AG04450 (cell line): ENCODE measurements at regions of chr10 and their contacts with region 1.

Region 1: DNA sequence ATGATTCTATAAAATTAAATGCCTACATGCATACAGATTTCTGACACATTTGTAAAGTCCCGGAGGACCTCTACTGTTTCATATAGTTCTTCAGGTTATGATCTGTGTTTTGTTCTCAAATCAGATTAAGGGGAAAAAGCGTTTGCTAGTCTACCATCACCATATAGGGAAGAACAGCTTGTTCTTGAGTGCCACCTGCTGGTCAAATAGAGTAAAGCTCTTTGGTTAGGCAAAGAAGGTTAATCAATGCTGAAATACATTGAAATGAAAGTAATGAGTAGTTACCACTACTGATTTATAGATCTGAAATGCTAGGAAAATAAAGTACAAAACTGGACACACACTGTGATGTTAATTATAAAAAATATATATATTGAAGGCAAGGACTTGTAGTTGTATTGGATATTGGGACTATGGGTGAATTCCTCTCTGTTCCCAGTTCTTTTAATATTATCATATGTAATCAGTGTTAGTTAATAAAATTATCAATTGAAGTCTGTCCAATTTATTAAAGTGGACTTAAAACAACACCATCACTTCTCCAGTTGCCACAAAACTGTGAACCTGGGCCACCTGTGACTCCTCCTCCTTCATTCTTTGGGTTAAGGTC is 72.6 kb upstream of the PDLIM1 start:
- DNase-seq: no peak
- H3K4me3 ChIP-seq: no peak overlapping the region
- H3K27ac ChIP-seq: no peak overlapping the region
- H3K27me3 ChIP-seq: peaks cover 5% of the 10 kb centered on the region
- CTCF ChIP-seq: peak; percentile 88

Region 2: GRCh38 chr10:94500063-94500462 is 863.3 kb before region 1 on chr10:
- CTCF ChIA-PET with region 1: no interaction called
- POLR2A ChIA-PET with region 1: no interaction called
- DNase-seq: no peak
- H3K4me3 ChIP-seq: no peak overlapping the region
- H3K27ac ChIP-seq: no peak overlapping the region
- H3K27me3 ChIP-seq: no peaks in the 10 kb centered on the region
- CTCF ChIP-seq: peak; percentile 59

Region 3: DNA sequence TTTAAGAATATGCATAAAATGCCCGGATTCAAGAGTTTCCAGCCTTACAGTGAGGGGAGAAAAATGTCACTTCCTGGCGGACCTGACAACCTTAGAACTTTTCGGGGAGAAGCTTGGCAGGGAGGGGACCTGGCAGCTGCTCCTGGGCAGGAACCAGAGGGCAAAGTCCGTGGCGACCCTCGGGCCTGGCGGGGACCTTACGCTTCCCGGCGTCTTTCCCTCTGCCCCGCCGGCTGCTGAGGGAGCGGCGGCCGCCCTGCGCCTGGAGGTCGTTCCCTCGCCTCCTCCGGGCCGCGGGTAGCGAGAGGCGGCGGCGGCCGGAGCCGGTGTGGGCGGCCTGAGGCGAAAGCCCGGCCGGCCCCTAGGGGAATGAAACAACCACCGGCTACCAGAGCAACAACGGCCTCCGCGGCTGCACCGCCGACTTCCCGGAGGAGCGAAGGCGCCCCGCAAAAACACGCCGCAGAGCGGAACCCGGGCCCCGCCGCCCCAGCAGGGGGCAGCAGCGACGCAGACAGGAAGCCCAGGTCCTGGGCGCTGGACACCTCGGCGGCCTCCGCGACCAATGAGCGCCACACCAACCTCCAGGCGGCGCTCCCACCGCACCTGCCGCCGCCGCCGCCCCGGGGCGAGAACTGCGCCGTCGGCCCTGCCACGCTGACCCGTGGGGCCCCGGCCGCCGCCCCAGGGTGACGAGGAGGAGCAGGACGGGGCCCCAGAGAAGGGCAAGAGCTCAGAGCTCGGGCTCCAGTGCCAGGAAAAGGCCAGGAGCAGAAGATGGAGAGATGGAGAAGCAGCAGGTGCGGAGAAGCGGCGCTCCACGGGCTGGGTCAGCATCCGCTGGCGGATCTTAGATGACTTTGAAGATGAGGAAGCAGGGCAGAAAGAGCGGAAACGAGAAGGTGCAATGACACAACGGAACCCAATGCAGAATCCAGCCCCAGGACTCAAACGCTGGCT is 179.9 kb before region 1 on chr10:
- CTCF ChIA-PET with region 1: interaction called, 130 read pairs
- POLR2A ChIA-PET with region 1: no interaction called
- DNase-seq: peak; percentile 58
- H3K4me3 ChIP-seq: peak overlapping the region; percentile 65
- H3K27ac ChIP-seq: no peak overlapping the region
- H3K27me3 ChIP-seq: peaks cover 8% of the 10 kb centered on the region
- CTCF ChIP-seq: peak; percentile 81

Region 4: DNA sequence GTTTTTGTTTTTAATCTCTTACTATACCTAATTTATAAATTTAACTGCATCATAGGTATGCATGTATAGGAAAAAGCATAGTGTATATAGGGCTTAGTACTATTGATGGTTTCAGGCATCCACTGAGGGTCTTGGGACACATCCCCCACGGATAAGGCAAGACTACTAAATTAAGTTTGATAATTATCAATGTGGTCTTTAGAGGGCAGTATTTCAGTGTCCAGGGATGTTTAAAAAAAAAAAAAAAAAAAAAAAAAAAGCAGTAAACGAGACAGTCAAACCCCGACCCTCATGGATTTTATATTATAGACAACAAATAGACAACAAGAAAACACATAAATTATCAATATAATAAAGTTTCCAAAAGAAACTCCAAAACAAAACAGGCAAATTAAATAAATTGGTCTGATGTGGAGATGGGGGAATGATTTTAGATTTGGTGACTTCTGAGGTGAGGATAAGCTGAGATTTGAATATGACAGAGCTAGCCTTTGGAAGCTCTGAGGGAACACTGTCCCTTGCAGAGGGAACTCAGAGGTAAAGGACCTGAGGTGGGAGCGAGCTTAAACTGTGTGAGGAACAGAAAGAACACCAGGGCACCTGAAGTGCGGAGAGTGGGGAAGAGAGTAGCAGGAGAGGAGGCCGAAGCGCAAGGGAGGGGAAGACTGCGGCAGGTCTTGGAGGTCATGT is 154.6 kb before region 1 on chr10:
- CTCF ChIA-PET with region 1: interaction called, 67 read pairs
- POLR2A ChIA-PET with region 1: no interaction called
- DNase-seq: no peak
- H3K4me3 ChIP-seq: no peak overlapping the region
- H3K27ac ChIP-seq: no peak overlapping the region
- H3K27me3 ChIP-seq: no peaks in the 10 kb centered on the region
- CTCF ChIP-seq: peak; percentile 56

Region 5: GRCh38 chr10:95273393-95274312 is 89.8 kb before region 1 on chr10:
- CTCF ChIA-PET with region 1: interaction called, 27 read pairs
- POLR2A ChIA-PET with region 1: interaction called, 7 read pairs
- DNase-seq: peak; percentile 65
- H3K4me3 ChIP-seq: peak overlapping the region; percentile 10; the same call in 1 of the 2 replicates
- H3K27ac ChIP-seq: peak overlapping the region; percentile 94
- H3K27me3 ChIP-seq: no peaks in the 10 kb centered on the region
- CTCF ChIP-seq: no peak

Region 6: DNA sequence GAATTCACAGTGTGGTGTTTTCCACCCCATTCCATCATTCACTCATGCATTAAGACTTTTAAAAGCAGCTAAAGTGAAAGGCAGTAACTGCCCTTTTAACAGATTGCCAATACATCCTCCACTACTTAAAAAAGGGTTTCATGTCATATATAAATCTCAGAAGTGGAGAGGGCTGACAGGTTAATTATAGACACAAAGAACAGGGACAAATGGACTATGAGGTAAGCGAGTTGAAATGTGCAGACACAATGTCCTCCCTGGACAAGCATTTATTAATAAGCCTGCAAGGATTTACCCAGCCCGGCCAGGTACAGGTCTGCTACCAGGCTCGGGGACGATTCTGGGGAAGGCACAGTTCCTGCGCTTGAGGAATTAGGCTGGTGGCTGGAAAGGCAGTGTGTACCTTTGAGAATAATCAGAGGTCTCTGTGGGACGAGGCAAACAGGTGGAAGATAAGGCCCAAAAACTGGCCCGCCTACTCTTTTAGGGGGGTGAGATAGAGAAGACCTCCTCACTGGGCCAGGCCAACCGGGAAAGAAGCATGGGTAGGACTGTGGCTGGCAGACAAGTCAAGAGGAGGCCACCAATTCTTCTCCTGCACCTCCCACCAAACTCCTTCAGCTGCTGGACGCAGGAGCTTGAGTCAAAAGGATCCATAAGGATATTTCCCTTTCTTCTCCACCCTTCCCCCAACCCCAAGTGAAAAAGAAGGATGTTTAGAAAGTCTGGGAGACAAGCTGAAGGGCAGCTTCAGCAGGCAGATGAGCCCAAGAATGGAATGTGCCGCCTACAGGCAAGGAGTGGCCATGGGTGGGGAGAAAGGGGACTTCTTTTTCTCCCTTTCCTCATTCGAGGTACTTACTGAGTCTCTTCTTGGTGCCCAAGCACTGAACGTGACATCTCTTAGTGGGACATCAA is 74.1 kb before region 1 on chr10:
- CTCF ChIA-PET with region 1: interaction called, 15 read pairs
- POLR2A ChIA-PET with region 1: no interaction called
- DNase-seq: no peak
- H3K4me3 ChIP-seq: peak overlapping the region; percentile 92
- H3K27ac ChIP-seq: no peak overlapping the region
- H3K27me3 ChIP-seq: no peaks in the 10 kb centered on the region
- CTCF ChIP-seq: peak; percentile 30; the same call in 1 of the 2 replicates

Region 7: DNA sequence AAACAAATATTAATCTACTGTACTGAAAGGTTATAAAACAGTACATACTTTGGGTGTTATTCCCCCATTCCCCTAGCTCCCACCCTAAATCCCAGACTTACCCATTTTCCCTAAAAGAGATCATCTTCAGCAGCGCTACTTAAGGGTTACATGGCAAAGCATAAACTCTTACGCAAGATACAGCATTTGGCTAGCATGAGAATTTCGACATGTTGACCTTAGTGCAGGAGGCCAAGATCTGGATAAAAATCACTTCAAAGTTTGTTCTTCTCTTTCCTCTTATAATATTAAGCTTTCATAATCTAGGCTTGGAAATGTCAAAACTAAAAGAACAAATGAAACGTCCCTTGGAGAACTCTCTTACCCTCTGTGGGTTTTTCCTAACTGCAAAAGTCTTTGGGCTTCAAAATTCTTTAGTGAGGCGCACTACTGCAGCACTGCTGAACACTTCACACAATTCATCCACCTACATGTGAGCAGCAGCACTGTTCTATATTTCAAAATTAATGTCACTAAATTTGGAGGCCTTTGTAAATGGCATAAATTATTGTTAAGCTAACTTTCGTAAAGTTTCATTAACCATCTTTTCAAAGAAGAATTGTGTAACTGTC is 13.1 kb before region 1 on chr10:
- CTCF ChIA-PET with region 1: interaction called, 16 read pairs
- POLR2A ChIA-PET with region 1: interaction called, 3 read pairs
- DNase-seq: no peak
- H3K4me3 ChIP-seq: no peak overlapping the region
- H3K27ac ChIP-seq: no peak overlapping the region
- H3K27me3 ChIP-seq: no peaks in the 10 kb centered on the region
- CTCF ChIP-seq: no peak

Region 8: GRCh38 chr10:95588025-95588424 is 224.6 kb after region 1 on chr10:
- CTCF ChIA-PET with region 1: no interaction called
- POLR2A ChIA-PET with region 1: no interaction called
- DNase-seq: no peak
- H3K4me3 ChIP-seq: no peak overlapping the region
- H3K27ac ChIP-seq: no peak overlapping the region
- H3K27me3 ChIP-seq: no peaks in the 10 kb centered on the region
- CTCF ChIP-seq: no peak